ENCODE measurements at regions of chr7 and their contacts with region 1.

Region 1: GRCh38 chr7:18495412-18496340 is at the start of gene HDAC9:
- DNase-seq: peak in 4 of 5 donors; percentile 58 to 73 (median 70)
- ATAC-seq: peak; percentile 86 to 95 (median 94)
- H3K4me3 ChIP-seq: peak within 1 kb of the TSS; percentile 25 to 65 (median 58)
- H3K27ac ChIP-seq: peak within 1 kb of the TSS; percentile 69 to 92 (median 81)
- H3K4me1 ChIP-seq: peaks cover 0 to 43% (median 15%) of the 10 kb centered on the region in 12 donors
- H3K27me3 ChIP-seq: no peaks in the 10 kb centered on the region
- CTCF ChIP-seq: no peak
- POLR2A ChIP-seq: peak in 1 of 2 donors; percentile 52
- total RNA-seq, gene HDAC9: 20.0 to 62.9 (median 40.3) TPM

Region 2: GRCh38 chr7:18384491-18385143 is 111.1 kb before region 1 on chr7:
- intact Hi-C with region 1: loop called in 1 of 10 experiments (anchors 10 kb)
- DNase-seq: no peak
- ATAC-seq: no peak
- H3K4me3 ChIP-seq: no peak overlapping the region
- H3K27ac ChIP-seq: no peak overlapping the region
- H3K4me1 ChIP-seq: peaks cover 0 to 29% (median 9%) of the 10 kb centered on the region in 12 donors
- H3K27me3 ChIP-seq: no peaks in the 10 kb centered on the region
- CTCF ChIP-seq: no peak
- POLR2A ChIP-seq: no peak

Region 3: DNA sequence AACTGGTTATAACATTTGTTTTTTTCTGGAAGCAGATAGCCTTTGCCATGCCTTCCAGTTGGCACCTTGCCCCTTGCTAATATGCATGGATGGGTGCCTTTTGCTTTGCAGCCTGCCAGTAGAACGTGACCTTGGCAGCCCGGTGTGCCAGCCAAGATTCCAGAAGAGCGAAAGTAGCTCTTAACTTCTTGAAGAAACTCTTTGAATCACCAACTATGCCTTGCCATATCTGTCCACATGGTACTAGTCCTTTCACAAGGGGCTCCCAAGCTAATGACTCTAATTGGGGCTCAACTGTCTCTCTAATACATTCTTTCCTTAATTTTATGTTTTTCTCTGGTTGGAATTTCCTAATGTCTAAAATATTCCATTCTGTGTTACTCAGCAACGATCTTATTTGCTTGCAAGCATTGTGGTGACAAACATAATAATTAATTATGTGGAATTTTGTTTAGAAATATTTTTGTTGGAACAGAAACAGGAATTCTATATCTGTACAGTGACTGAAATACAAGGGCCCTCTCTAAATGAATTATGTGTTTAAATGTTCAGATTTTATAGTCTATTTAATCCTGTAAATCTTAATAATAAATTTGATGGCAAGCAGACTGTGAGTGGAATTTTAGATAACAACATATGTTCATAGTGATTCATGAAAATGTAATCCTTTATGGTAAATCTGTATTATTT is 45.6 kb after region 1 on chr7:
- intact Hi-C with region 1: loop called in 1 of 10 experiments (anchors 10 kb)
- DNase-seq: peak; percentile 63 to 79 (median 69)
- ATAC-seq: peak; percentile 83 to 90 (median 86)
- H3K4me3 ChIP-seq: peak overlapping the region in 1 of 12 donors; percentile 5
- H3K27ac ChIP-seq: peak overlapping the region in 10 of 12 donors; percentile 16 to 80 (median 45)
- H3K4me1 ChIP-seq: peaks cover 0 to 41% (median 12%) of the 10 kb centered on the region in 12 donors
- H3K27me3 ChIP-seq: no peaks in the 10 kb centered on the region
- CTCF ChIP-seq: no peak
- POLR2A ChIP-seq: no peak

Region 4: DNA sequence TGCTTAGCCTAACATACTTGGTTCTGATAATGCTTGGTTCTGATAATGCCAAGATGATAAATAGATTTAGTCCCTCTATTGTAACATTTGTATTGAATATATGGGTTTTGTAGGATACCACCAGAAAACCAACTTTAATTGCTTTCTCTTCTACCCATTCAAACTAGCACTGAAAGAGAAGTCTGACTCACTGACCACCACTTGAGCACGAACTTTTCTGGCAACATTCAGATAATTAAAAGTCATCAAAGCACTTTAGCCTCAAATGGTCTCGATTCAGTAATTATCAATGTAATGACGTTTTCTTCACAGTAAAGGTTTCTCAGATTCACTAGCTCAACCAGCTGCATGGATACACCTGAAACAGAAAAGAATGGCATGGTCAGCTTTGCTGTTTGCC is 62.8 kb after region 1 on chr7:
- intact Hi-C with region 1: loop called in 4 of 10 experiments (anchors 5 kb)
- DNase-seq: no peak
- ATAC-seq: no peak
- H3K4me3 ChIP-seq: no peak overlapping the region
- H3K27ac ChIP-seq: no peak overlapping the region
- H3K4me1 ChIP-seq: peaks cover 0 to 38% (median 18%) of the 10 kb centered on the region in 12 donors
- H3K27me3 ChIP-seq: no peaks in the 10 kb centered on the region
- CTCF ChIP-seq: no peak
- POLR2A ChIP-seq: no peak

Region 5: GRCh38 chr7:18648849-18649758 is 153.4 kb after region 1 on chr7:
- intact Hi-C with region 1: no loop called
- DNase-seq: no peak
- ATAC-seq: peak in 2 of 4 donors; percentile 33 to 65
- H3K4me3 ChIP-seq: no peak overlapping the region
- H3K27ac ChIP-seq: no peak overlapping the region
- H3K4me1 ChIP-seq: peaks cover 0 to 5% (median 0%) of the 10 kb centered on the region in 12 donors
- H3K27me3 ChIP-seq: no peaks in the 10 kb centered on the region
- CTCF ChIP-seq: no peak
- POLR2A ChIP-seq: no peak

Region 6: DNA sequence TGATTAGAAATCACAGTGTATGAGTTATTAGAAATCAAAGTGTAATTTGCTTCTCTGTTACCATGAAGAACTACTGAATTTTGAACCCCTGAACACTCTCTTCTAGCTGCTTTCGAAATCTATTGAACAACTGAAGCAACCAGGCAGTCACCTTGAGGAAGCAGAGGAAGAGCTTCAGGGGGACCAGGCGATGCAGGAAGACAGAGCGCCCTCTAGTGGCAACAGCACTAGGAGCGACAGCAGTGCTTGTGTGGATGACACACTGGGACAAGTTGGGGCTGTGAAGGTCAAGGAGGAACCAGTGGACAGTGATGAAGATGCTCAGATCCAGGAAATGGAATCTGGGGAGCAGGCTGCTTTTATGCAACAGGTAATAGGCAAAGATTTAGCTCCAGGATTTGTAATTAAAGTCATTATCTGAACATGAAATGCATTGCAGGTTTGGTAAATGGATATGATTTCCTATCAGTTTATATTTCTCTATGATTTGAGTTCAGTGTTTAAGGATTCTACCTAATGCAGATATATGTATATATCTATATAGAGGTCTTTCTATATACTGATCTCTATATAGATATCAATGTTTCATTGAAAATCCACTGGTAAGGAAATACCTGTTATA is 170.5 kb after region 1 on chr7:
- intact Hi-C with region 1: loop called in 2 of 10 experiments (anchors 10 kb)
- DNase-seq: peak; percentile 79 to 83 (median 79)
- ATAC-seq: peak; percentile 77 to 94 (median 90)
- H3K4me3 ChIP-seq: no peak overlapping the region
- H3K27ac ChIP-seq: no peak overlapping the region
- H3K4me1 ChIP-seq: peaks cover 0 to 23% (median 9%) of the 10 kb centered on the region in 12 donors
- H3K27me3 ChIP-seq: no peaks in the 10 kb centered on the region
- CTCF ChIP-seq: peak; percentile 79 to 98 (median 92)
- POLR2A ChIP-seq: no peak

Region 7: GRCh38 chr7:18978108-18978495 is 482.4 kb after region 1 on chr7:
- intact Hi-C with region 1: no loop called
- DNase-seq: no peak
- ATAC-seq: peak in 3 of 4 donors; percentile 42 to 67 (median 46)
- H3K4me3 ChIP-seq: no peak overlapping the region
- H3K27ac ChIP-seq: no peak overlapping the region
- H3K4me1 ChIP-seq: peaks cover 0 to 13% (median 3%) of the 10 kb centered on the region in 12 donors
- H3K27me3 ChIP-seq: no peaks in the 10 kb centered on the region
- CTCF ChIP-seq: no peak
- POLR2A ChIP-seq: no peak